Aorta (tissue), 5 donors: ENCODE measurements at regions of chr17 and their contacts with region 1.

Region 1: DNA sequence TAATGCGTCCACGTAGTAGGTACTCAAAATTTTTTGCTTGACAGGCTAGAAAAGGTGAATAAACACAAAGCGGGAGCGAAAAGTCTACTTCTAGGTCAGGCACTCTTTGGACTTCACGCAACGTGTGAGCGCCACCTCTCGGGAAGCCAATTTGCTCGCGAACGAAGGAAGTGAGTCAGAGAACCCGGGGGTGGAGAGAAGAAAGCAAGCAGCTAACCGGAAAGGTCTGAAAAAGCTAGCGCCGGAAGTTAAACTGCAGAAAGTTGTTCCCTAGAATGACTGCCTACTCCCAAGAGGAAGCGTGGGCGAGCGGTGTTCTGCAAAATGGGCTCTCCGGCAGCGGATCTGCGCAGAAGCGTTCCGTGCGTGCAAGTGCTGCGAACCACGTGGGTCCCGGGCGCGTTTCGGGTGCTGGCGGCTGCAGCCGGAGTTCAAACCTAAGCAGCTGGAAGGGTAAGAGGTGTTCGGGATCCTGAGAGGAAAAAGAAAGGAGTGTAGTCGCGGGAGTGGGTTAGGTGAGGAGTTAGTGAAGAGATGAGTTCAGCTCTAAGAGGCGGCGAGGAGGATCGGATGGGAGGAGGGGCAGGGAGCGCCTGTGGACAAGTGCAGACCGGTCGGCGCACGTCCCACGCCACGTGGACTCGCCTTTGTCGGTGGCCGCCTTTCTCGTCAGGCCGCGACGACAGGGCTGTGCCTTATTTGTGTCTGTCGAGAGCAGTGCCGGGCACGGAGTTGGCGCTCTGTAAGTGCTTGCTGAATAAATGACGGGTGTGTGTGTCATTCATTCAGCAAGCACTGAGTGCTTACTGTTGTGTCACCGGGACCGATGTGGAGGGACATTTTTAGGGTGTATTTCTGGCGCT is at the start of gene NME1:
- DNase-seq: peak; percentile 96 to 97
- ATAC-seq: peak; percentile 98
- H3K4me3 ChIP-seq: peak within 1 kb of the TSS; percentile 37 to 55
- H3K27ac ChIP-seq: peak within 1 kb of the TSS in 1 of 2 donors; percentile 77
- H3K4me1 ChIP-seq: no peaks in the 10 kb centered on the region
- H3K27me3 ChIP-seq: no peaks in the 10 kb centered on the region
- total RNA-seq, gene NME1: 24.5 to 42.3 TPM

Region 2: DNA sequence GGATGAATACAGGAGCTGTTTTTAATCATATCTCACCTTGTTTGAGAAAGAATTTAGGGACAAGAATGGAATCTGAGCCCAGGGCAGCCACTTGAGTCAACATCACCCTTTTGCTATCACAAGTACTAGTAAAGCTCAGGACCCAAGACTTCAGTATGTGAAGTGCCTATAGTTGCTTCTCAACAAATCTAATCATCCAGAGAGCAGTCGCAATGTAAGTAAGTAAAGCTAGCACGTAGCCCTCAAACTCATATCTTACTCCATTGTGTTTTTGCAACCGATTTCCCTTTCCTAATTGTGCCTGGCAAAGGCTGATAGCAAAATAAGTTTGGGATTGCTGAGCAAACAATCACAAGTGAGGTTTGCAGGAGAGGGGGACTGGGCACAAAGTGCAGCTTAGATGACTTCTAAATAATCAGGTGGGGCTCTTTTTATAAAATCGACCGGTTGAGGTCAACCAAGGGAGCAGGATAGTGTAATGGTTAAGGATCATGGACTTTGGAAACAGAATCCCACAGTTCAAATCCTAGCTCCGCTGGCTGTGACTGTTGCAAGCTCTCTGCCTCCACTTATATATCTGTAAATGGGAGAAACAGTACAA is 300.3 kb before region 1 on chr17:
- intact Hi-C with region 1: loop called in 1 of 2 experiments (anchors 2 kb)
- DNase-seq: no peak
- ATAC-seq: no peak
- H3K4me3 ChIP-seq: no peak overlapping the region
- H3K27ac ChIP-seq: no peak overlapping the region
- H3K4me1 ChIP-seq: peaks cover 0 to 2% of the 10 kb centered on the region in 2 donors
- H3K27me3 ChIP-seq: no peaks in the 10 kb centered on the region

Region 3: GRCh38 chr17:51000835-51001638 is 152.4 kb before region 1 on chr17:
- intact Hi-C with region 1: loop called (anchors 2 kb)
- DNase-seq: no peak
- ATAC-seq: no peak
- H3K4me3 ChIP-seq: no peak overlapping the region
- H3K27ac ChIP-seq: no peak overlapping the region
- H3K4me1 ChIP-seq: no peaks in the 10 kb centered on the region
- H3K27me3 ChIP-seq: no peaks in the 10 kb centered on the region

Region 4: DNA sequence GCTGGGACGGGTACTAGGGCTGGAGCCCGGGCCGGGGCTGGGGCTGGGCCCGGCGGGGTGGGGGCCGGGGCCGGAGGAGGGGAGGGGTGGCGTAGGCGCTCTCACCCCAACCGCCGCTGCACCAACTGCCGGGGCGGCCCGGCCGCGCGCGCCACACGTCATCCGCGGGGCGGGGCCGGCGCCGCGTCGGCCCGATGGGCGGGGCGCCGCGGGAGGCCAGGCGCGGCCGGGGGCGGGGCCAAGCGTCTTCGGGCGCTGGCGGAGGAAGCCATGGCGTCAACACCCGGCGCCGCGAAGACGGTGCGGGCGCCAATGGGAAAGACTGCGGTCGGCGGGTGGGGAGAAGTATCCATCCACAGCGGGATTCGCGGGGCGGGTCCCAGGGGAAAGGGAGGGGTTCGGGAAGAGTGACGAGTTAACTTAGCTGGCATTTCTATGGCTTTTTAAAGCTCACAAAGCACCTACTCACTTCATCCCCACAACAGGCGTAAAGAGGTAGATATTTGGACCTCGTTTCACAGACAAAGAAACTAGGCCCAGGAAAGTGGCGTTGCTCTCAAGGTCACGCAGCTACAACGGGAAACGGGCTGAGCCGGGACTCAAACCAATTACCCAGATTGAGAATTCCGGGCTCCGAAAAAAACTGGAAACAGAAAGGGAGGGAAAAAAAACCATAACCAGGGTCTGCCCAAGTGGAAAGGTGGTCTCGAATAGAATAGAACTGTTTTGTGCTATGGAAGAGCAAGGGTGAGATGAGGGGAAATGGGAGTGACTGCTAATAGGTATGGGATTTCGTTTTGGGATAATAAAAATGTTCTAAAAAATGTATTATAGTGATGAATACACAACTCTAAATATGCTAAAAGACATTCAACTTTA is 32.5 kb before region 1 on chr17 and contains the start of gene SPAG9:
- intact Hi-C with region 1: loop called (anchors 1 to 2 kb)
- DNase-seq: peak; percentile 98 to 99
- ATAC-seq: peak; percentile 94
- H3K4me3 ChIP-seq: peak within 1 kb of the TSS; percentile 50 to 97
- H3K27ac ChIP-seq: peak within 1 kb of the TSS; percentile 94 to 100
- H3K4me1 ChIP-seq: peaks cover 0 to 5% of the 10 kb centered on the region in 2 donors
- H3K27me3 ChIP-seq: no peaks in the 10 kb centered on the region
- total RNA-seq, gene SPAG9: 137 to 151 TPM